ENCODE measurements at regions of chr15 and their contacts with region 1.

Region 1: DNA sequence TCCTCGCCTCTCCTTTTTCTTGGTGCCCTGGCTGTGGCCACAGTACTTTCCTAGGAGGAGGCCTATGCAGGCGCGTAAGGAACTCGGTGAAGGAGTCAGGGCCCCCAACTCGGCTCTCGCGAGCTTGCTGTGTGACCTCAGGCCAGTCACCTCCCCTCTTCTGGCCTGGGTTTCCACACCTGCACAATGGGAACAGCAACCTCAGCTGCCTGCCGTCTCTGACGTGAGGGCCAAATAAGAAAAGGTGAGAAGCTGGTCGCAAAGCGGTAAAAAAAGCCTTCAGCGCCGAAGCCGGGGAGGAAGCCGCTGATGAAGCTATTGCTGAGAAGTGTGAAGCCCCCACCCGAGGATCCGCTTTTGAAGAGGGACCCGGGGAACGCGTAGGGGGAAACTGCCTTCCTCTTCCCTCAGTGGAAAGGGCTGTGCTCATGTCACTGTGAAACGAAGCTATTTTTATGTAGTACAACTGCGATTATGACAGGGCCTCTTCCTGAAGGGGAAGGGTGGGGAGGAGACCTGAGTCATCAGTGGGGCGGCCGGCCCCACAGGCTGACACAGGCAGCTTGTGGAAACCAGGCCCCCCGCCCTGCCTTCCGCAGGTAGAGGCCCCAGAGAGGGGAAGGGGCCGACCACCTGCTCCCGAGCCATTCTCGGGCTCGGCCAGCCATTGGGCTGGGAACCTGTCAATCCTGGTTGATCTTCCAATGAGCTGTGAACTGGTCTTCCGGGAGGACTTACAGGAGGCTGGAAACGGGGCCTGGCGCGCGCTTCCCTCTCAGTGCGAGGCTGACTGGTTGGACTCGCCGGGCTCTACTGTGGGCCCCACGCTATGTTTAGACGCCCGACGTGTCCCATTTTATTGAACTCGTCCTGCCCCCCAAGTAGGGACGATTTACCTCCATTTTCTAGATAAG is 18.0 kb upstream of the ANKDD1A start:
- DNase-seq: peak; percentile 83 to 96 (median 92)
- ATAC-seq: peak; percentile 75 to 81 (median 80)
- H3K4me3 ChIP-seq: peak overlapping the region; percentile 38 to 48
- H3K4me3 Mint-ChIP-seq: peak overlapping the region; percentile 81 to 97 (median 82)
- H3K27ac ChIP-seq: peak overlapping the region; percentile 82
- H3K27ac Mint-ChIP-seq: peak overlapping the region; percentile 97
- H3K4me1 ChIP-seq: peaks cover 52 to 71% of the 10 kb centered on the region in 2 experiments
- H3K4me1 Mint-ChIP-seq: peaks cover 66 to 75% (median 72%) of the 10 kb centered on the region in 3 donors
- H3K27me3 ChIP-seq: no peaks in the 10 kb centered on the region
- H3K27me3 Mint-ChIP-seq: no peaks in the 10 kb centered on the region

Region 2: DNA sequence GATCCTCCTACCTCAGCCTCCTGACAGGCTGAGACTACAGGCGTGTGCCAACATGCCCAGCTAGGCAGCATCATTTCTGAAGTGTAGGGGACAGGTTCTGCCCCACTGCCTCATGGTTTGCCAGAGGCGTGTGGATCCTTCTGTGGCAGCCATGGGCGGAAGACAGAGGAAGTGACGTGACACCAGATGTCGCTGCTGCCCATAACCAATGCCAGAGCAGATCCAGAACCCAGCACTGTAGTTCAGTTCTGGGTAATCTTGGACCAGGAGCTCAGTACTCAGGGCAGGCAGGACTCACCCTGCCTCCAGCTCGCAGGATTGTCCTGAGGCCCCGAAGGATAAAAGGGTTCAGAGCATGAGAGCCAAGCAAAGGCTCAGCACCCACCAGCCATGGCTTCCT is 126.5 kb before region 1 on chr15:
- CTCF ChIA-PET with region 1: no interaction called
- POLR2A ChIA-PET with region 1: no interaction called
- DNase-seq: peak in 2 of 35 experiments; percentile 2 to 34
- ATAC-seq: peak in 1 of 4 experiments; percentile 32
- H3K4me3 ChIP-seq: no peak overlapping the region
- H3K4me3 Mint-ChIP-seq: no peak overlapping the region
- H3K27ac ChIP-seq: no peak overlapping the region
- H3K27ac Mint-ChIP-seq: no peak overlapping the region
- H3K4me1 ChIP-seq: peaks cover 0 to 3% of the 10 kb centered on the region in 2 experiments
- H3K4me1 Mint-ChIP-seq: peaks cover 0 to 5% (median 0%) of the 10 kb centered on the region in 3 donors
- H3K27me3 ChIP-seq: peaks cover 0 to 5% of the 10 kb centered on the region in 2 experiments
- H3K27me3 Mint-ChIP-seq: peaks cover 4% of the 10 kb centered on the region in 2 donors

Region 3: GRCh38 chr15:64841258-64842095 is 52.3 kb before region 1 on chr15 and contains the start of gene PLEKHO2:
- CTCF ChIA-PET with region 1: interaction called, 4 to 42 read pairs
- POLR2A ChIA-PET with region 1: interaction called, 3 to 7 read pairs
- DNase-seq: peak; percentile 75 to 93 (median 84)
- ATAC-seq: peak; percentile 80 to 83 (median 82)
- H3K4me3 ChIP-seq: peak within 1 kb of the TSS; percentile 61 to 79
- H3K4me3 Mint-ChIP-seq: peak within 1 kb of the TSS; percentile 87 to 96 (median 94)
- H3K27ac ChIP-seq: peak within 1 kb of the TSS; percentile 63
- H3K27ac Mint-ChIP-seq: peak within 1 kb of the TSS; percentile 92 to 95
- H3K4me1 ChIP-seq: peaks cover 13 to 74% of the 10 kb centered on the region in 2 experiments
- H3K4me1 Mint-ChIP-seq: peaks cover 77 to 86% (median 83%) of the 10 kb centered on the region in 3 donors
- H3K27me3 ChIP-seq: no peaks in the 10 kb centered on the region
- H3K27me3 Mint-ChIP-seq: no peaks in the 10 kb centered on the region
- total RNA-seq, gene PLEKHO2: 9.2 to 22.7 (median 17.1) TPM

Region 4: DNA sequence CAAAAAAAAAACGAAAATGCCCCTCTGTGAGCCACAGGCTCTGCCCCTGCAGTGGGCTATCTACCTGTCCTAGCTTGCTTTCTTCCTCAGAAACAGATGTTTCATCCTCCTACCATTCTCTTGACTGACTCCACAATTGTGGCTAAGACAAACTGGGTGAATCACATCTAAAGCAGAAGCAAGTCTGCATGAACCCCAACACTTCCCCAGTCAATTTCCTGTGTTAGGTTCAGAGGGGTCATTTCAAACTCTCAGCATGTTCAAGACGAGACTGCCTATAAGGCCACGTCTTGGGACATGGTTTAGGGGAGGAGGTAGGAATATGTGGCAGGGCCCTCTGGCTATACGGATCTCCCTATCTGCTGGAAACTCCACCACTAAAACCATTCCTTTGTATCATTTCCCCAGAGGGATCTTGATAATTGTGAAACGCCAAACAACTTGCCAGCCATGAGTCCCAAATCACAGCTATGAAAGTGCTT is 10.6 kb before region 1 on chr15:
- CTCF ChIA-PET with region 1: interaction called, 10 to 12 read pairs
- POLR2A ChIA-PET with region 1: interaction called in 1 of 2 experiments, 4 read pairs
- DNase-seq: peak in 4 of 35 experiments; percentile 15 to 65 (median 32)
- ATAC-seq: peak; percentile 63 to 74 (median 66)
- H3K4me3 ChIP-seq: no peak overlapping the region
- H3K4me3 Mint-ChIP-seq: peak overlapping the region in 2 of 3 donors; percentile 3 to 27
- H3K27ac ChIP-seq: peak overlapping the region; percentile 36
- H3K27ac Mint-ChIP-seq: peak overlapping the region; percentile 70 to 88
- H3K4me1 ChIP-seq: peaks cover 19 to 40% of the 10 kb centered on the region in 2 experiments
- H3K4me1 Mint-ChIP-seq: peaks cover 32 to 34% (median 33%) of the 10 kb centered on the region in 3 donors
- H3K27me3 ChIP-seq: no peaks in the 10 kb centered on the region
- H3K27me3 Mint-ChIP-seq: no peaks in the 10 kb centered on the region

Region 5: DNA sequence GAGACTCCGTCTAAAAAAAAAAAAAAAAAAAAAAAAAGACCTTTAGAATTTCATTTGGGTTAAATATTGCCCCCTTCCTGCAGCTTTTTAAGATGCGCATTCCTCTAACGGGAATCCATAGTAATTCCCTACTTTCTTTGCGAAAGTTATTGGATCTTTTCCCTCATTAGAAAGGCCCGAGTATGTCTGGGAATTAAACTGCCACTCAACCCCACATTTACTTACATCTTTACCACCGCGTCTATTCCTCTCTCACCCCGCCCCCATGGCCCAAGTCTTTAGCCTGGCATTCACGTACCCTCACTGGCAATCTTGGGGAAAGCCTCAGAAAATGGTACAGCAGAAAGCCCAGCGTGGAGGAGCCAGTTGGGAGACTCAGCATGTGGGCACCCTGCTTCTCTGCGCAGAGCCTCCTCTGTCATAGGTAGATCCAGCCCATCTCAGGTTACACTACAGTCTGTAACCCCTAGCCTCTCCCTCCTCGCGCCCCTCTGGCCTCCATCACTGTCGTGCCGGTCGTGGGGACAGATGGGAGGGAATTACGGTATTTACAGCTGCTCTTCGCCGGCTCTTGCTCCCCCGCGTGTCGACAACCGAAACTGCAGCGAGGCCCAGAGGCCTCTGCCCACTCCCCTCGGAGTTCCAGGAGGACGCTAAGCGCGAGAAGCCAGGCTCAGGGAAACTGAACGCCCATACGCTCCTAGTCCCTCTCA is 11.5 kb after region 1 on chr15:
- CTCF ChIA-PET with region 1: interaction called in 1 of 2 experiments, 11 read pairs
- POLR2A ChIA-PET with region 1: interaction called in 1 of 2 experiments, 9 read pairs
- DNase-seq: peak; percentile 43 to 83 (median 73)
- ATAC-seq: peak; percentile 69 to 80 (median 76)
- H3K4me3 ChIP-seq: peak overlapping the region in 1 of 2 donors; percentile 30
- H3K4me3 Mint-ChIP-seq: peak overlapping the region; percentile 47 to 72 (median 61)
- H3K27ac ChIP-seq: no peak overlapping the region
- H3K27ac Mint-ChIP-seq: peak overlapping the region; percentile 34 to 66
- H3K4me1 ChIP-seq: peaks cover 11 to 35% of the 10 kb centered on the region in 2 experiments
- H3K4me1 Mint-ChIP-seq: peaks cover 37 to 42% (median 42%) of the 10 kb centered on the region in 3 donors
- H3K27me3 ChIP-seq: peaks cover 0 to 8% of the 10 kb centered on the region in 2 experiments
- H3K27me3 Mint-ChIP-seq: no peaks in the 10 kb centered on the region

Region 6: DNA sequence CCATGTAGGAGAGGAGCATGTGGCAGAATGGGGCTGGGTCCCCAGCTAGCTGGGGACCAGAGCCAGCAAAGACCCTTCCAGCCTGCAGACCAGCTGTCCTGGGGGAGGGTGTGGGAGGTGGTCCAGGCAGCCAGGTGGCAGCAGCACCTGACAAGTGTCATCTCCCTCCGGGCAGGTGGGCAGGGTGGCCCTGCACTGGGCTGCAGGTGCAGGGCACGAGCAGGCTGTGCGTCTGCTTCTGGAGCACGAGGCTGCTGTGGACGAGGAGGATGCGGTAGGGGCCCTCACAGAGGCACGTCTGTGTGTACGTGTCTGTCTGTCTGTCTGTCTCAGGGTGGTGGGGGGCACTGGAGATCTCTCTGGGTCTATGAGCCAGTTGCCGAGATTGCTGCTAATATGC is 23.5 kb after region 1 on chr15:
- CTCF ChIA-PET with region 1: no interaction called
- POLR2A ChIA-PET with region 1: no interaction called
- DNase-seq: no peak
- ATAC-seq: no peak
- H3K4me3 ChIP-seq: no peak overlapping the region
- H3K4me3 Mint-ChIP-seq: no peak overlapping the region
- H3K27ac ChIP-seq: no peak overlapping the region
- H3K27ac Mint-ChIP-seq: no peak overlapping the region
- H3K4me1 ChIP-seq: peaks cover 0 to 2% of the 10 kb centered on the region in 2 experiments
- H3K4me1 Mint-ChIP-seq: peaks cover 2 to 10% (median 4%) of the 10 kb centered on the region in 3 donors
- H3K27me3 ChIP-seq: peaks cover 0 to 13% of the 10 kb centered on the region in 2 experiments
- H3K27me3 Mint-ChIP-seq: no peaks in the 10 kb centered on the region

Region 7: GRCh38 chr15:65077981-65078352 is 184.2 kb after region 1 on chr15:
- CTCF ChIA-PET with region 1: no interaction called
- POLR2A ChIA-PET with region 1: no interaction called
- DNase-seq: peak in 31 of 35 experiments; percentile 6 to 65 (median 29)
- ATAC-seq: peak; percentile 49 to 66 (median 64)
- H3K4me3 ChIP-seq: no peak overlapping the region
- H3K4me3 Mint-ChIP-seq: peak overlapping the region in 2 of 3 donors; percentile 21 to 59
- H3K27ac ChIP-seq: no peak overlapping the region
- H3K27ac Mint-ChIP-seq: peak overlapping the region in 1 of 2 donors; percentile 55
- H3K4me1 ChIP-seq: peaks cover 2 to 19% of the 10 kb centered on the region in 2 experiments
- H3K4me1 Mint-ChIP-seq: peaks cover 18 to 24% (median 21%) of the 10 kb centered on the region in 3 donors
- H3K27me3 ChIP-seq: peaks cover 0 to 44% of the 10 kb centered on the region in 2 experiments
- H3K27me3 Mint-ChIP-seq: peaks cover 28 to 31% of the 10 kb centered on the region in 2 donors